ENCODE measurements at regions of chr2 and their contacts with region 1.

Region 1: DNA sequence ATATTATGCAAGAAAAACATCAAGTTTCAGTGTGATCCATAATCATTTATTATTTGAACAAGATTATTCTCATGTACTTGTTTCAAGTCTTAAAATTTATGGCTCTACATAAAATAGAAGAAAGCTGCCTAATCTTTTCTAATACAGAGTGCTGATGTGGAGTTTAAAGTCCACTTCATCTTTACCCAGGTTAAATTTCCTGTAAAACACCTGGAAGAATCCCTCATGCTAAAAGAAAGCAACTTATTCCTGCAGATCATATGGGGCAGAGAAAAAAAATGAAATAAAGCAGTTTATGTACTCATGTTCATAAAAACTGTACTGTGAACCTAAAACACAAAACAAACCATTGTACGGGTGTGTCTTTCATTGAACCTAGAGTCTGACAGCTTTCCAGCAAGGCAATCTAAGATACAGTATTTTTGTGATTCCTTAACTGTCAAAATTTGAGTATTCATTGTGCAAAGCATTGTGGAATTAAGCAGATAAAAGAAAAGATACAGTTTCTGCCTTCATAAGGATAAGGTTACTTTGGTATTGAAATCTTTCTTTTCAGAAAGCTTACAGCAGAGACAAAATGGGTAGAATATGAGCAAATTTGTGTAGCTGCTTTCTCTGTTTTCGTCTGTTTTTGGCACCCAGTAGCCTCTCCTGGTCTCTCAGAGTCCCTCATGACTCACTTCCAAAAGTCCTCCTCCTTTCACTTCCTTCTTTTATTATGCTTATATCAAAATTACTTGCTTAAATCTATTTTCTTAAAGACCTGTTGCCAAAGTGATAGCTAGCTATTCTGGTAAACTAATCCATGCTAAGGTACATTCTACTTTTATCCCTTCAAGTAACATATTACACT is 26.9 kb upstream of the GLS start:
- DNase-seq: no peak
- ATAC-seq: peak; percentile 74
- H3K4me3 ChIP-seq: no peak overlapping the region
- H3K27ac ChIP-seq: no peak overlapping the region
- H3K4me1 ChIP-seq: no peaks in the 10 kb centered on the region
- H3K27me3 ChIP-seq: no peaks in the 10 kb centered on the region
- CTCF ChIP-seq: no peak
- EP300 ChIP-seq: no peak
- POLR2A ChIP-seq: no peak
- RAD21 ChIP-seq: no peak

Region 2: DNA sequence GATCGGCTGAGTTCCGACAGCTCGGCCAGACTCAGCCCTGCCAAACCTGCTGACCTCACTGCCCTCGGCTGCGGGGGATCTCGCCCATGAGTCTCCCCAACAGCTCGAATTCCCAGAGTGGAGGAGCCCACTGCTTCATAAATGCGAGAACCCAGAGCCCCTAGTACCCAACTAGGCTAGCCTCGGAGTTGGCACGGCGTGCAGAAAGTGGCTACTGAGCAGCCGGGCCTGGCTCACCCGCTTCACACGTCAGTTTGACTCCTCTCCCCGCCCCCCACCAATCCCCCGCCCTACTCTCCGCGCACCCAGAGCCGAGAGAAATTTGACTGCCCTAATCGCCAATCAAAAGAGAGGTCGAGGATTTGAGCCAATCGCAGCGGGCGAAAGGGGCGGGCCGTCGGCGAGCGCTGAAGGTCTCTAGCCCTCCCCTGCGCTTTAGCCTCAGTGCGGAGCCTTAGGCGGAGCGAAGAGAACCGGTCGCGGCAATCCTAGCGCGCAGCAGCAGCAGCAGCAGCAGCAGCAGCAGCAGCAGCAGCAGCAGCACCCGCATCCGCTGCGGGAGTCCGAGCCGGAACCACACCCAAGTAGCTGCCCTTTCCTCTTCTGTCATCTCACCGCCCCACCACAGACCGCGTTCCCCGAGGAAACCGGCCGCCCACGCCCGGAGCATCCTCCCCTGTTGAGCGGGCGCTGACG is 26.8 kb after region 1 on chr2 and contains the start of gene GLS:
- CTCF ChIA-PET with region 1: interaction called, 12 read pairs
- POLR2A ChIA-PET with region 1: interaction called, 3 read pairs
- RAD21 ChIA-PET with region 1: interaction called, 9 read pairs
- SMC1A ChIA-PET with region 1: interaction called, 9 read pairs
- in situ Hi-C with region 1: no loop called
- intact Hi-C with region 1: loop called (anchors 1 kb)
- DNase-seq: peak; percentile 86
- ATAC-seq: peak; percentile 83
- H3K4me3 ChIP-seq: peak within 1 kb of the TSS; percentile 94
- H3K27ac ChIP-seq: peak within 1 kb of the TSS; percentile 95
- H3K4me1 ChIP-seq: peaks cover 6% of the 10 kb centered on the region; the same call in 1 of the 2 replicates
- H3K27me3 ChIP-seq: no peaks in the 10 kb centered on the region
- CTCF ChIP-seq: no peak
- EP300 ChIP-seq: 0 out of 4 replicates have a peak, but pooled peaks of 1 of the 2 experiments have one; percentile 20
- POLR2A ChIP-seq: peak; percentile 99
- RAD21 ChIP-seq: no peak
- polyA plus RNA-seq, gene GLS: 23.7 to 30.5 TPM

Region 3: DNA sequence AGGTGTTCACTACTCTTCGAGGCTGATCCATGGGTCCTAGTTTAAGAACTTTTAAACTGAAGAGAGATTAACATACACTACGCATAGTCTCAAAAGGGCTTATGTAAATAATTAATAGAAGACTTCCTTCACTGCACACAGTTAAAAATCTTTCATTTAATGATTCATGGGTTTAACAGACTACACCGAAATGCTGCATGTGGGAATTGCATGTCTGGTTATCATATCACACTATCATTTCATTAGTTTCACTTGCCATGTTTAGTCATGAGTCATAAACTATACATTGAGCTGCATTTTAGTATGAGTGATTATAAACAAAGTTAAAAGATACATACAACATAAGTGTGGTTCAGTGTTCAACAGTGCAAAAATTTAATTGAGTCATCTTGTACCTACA is 58.1 kb after region 1 on chr2:
- CTCF ChIA-PET with region 1: interaction called, 11 read pairs
- POLR2A ChIA-PET with region 1: interaction called, 3 read pairs
- RAD21 ChIA-PET with region 1: interaction called, 10 read pairs
- SMC1A ChIA-PET with region 1: interaction called, 5 read pairs
- in situ Hi-C with region 1: no loop called
- intact Hi-C with region 1: no loop called
- DNase-seq: peak; percentile 43
- ATAC-seq: peak; percentile 87
- H3K4me3 ChIP-seq: no peak overlapping the region
- H3K27ac ChIP-seq: peak overlapping the region; percentile 27; the same call in 1 of the 2 replicates
- H3K4me1 ChIP-seq: no peaks in the 10 kb centered on the region
- H3K27me3 ChIP-seq: no peaks in the 10 kb centered on the region
- CTCF ChIP-seq: no peak
- EP300 ChIP-seq: peak; percentile 33 to 42; a peak in 1 of 4 replicates
- POLR2A ChIP-seq: no peak
- RAD21 ChIP-seq: no peak

Region 4: GRCh38 chr2:190947711-190948251 is 94.0 kb after region 1 on chr2:
- CTCF ChIA-PET with region 1: interaction called, 89 read pairs
- POLR2A ChIA-PET with region 1: no interaction called
- RAD21 ChIA-PET with region 1: interaction called, 37 read pairs
- SMC1A ChIA-PET with region 1: interaction called, 57 read pairs
- in situ Hi-C with region 1: no loop called
- intact Hi-C with region 1: loop called (anchors 2 kb)
- DNase-seq: peak; percentile 45
- ATAC-seq: peak; percentile 69
- H3K4me3 ChIP-seq: no peak overlapping the region
- H3K27ac ChIP-seq: 0 out of 2 replicates have a peak overlapping the region, but pooled peaks have one; percentile 27
- H3K4me1 ChIP-seq: peaks cover 8% of the 10 kb centered on the region; the same call in 1 of the 2 replicates
- H3K27me3 ChIP-seq: no peaks in the 10 kb centered on the region
- CTCF ChIP-seq: peak; percentile 21 to 53 (median 34); a peak in 4 of 6 replicates
- EP300 ChIP-seq: no peak
- POLR2A ChIP-seq: no peak
- RAD21 ChIP-seq: peak; percentile 66

Region 5: GRCh38 chr2:191030521-191031154 is 176.9 kb after region 1 on chr2:
- CTCF ChIA-PET with region 1: interaction called, 21 read pairs
- POLR2A ChIA-PET with region 1: no interaction called
- RAD21 ChIA-PET with region 1: interaction called, 11 read pairs
- SMC1A ChIA-PET with region 1: interaction called, 18 read pairs
- in situ Hi-C with region 1: no loop called
- intact Hi-C with region 1: loop called (anchors 5 kb)
- DNase-seq: no peak
- ATAC-seq: peak; percentile 96
- H3K4me3 ChIP-seq: no peak overlapping the region
- H3K27ac ChIP-seq: no peak overlapping the region
- H3K4me1 ChIP-seq: no peaks in the 10 kb centered on the region
- H3K27me3 ChIP-seq: no peaks in the 10 kb centered on the region
- CTCF ChIP-seq: peak; percentile 62 to 73 (median 69)
- EP300 ChIP-seq: no peak
- POLR2A ChIP-seq: no peak
- RAD21 ChIP-seq: peak; percentile 65

Measured in GM12878 (cell line).